ENCODE measurements at regions of chr15 and their contacts with region 1.

Region 1: GRCh38 chr15:98421419-98422129 is 226.8 kb upstream of the IGF1R start:
- DNase-seq: peak; percentile 90

Region 2: DNA sequence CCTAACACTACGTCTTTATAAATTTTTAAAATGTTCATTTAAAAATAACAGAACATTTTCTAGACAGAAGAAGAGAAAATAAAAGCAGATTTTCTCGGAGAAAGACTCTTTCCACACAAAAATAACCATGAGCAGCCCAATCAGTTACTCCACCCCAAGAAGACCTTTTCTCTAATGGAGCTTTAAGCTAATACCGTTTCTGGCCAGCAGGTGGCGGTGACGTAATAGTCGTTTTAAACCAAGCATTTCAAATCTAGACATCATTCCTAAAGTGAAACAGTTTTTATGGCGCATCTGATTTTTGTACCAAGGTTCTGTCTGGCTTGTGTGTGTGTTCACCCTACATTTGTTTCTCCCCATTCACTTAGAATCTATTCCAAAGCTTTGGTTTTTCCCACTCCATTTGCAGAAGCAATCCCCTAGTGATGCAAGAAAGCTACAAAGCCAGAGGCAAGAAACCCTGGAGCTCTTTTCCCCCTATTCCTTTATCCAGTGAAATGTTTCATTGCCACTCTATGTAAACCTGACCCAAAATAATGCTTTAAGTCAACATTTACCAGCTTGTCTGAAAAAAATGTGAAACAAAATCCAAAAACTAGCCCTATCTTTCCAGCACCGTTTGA is 109.9 kb before region 1 on chr15:
- intact Hi-C with region 1: loop called (anchors 2 to 5 kb)
- DNase-seq: peak; percentile 92

Region 3: GRCh38 chr15:98484908-98485307 is 63.3 kb after region 1 on chr15:
- intact Hi-C with region 1: no loop called
- DNase-seq: no peak

Measured in posterior vena cava (tissue), 2 donors.